Activated T-helper 1 cell treated with anti-CD3 and anti-CD28 coated beads, Interleukin-12 subunit alpha, Interleukin-12 subunit beta, Interleukin-2, Interleukin-4 antibody, amounts not matched to agents 30 ng/mL and 10 ng/mL and 1 ng/mL, durations not matched to agents 14 hours and 24 hours and 36 hours (primary cell): ENCODE measurements at regions of chr22 and their contacts with region 1.

Region 1: GRCh38 chr22:19432133-19432851 is at the start of gene MRPL40:
- DNase-seq: peak; percentile 88
- H3K4me3 Mint-ChIP-seq: peak within 1 kb of the TSS; percentile 92
- H3K27ac Mint-ChIP-seq: peak within 1 kb of the TSS; percentile 94
- H3K4me1 Mint-ChIP-seq: peaks cover 41% of the 10 kb centered on the region
- H3K27me3 Mint-ChIP-seq: no peaks in the 10 kb centered on the region
- total RNA-seq, gene MRPL40: 36.0 and 38.5 TPM in 2 replicates

Region 2: GRCh38 chr22:19143967-19144400 is 288.3 kb before region 1 on chr22:
- intact Hi-C with region 1: loop called (anchors 1 kb)
- DNase-seq: peak; percentile 40
- H3K4me3 Mint-ChIP-seq: peak overlapping the region; percentile 98
- H3K27ac Mint-ChIP-seq: peak overlapping the region; percentile 97
- H3K4me1 Mint-ChIP-seq: peaks cover 23% of the 10 kb centered on the region
- H3K27me3 Mint-ChIP-seq: peaks cover 22% of the 10 kb centered on the region

Region 3: GRCh38 chr22:19291580-19292457 is 140.5 kb before region 1 on chr22 and contains the start of gene CLTCL1:
- intact Hi-C with region 1: loop called (anchors 5 kb)
- DNase-seq: peak; percentile 66
- H3K4me3 Mint-ChIP-seq: peak within 1 kb of the TSS; percentile 91
- H3K27ac Mint-ChIP-seq: peak within 1 kb of the TSS; percentile 88
- H3K4me1 Mint-ChIP-seq: peaks cover 24% of the 10 kb centered on the region
- H3K27me3 Mint-ChIP-seq: peaks cover 41% of the 10 kb centered on the region
- total RNA-seq, gene CLTCL1: 0.64 and 0.73 TPM in 2 replicates

Region 4: GRCh38 chr22:19376247-19376646 is 56.0 kb before region 1 on chr22:
- intact Hi-C with region 1: no loop called
- DNase-seq: no peak
- H3K4me3 Mint-ChIP-seq: no peak overlapping the region
- H3K27ac Mint-ChIP-seq: no peak overlapping the region
- H3K4me1 Mint-ChIP-seq: no peaks in the 10 kb centered on the region
- H3K27me3 Mint-ChIP-seq: no peaks in the 10 kb centered on the region

Region 5: DNA sequence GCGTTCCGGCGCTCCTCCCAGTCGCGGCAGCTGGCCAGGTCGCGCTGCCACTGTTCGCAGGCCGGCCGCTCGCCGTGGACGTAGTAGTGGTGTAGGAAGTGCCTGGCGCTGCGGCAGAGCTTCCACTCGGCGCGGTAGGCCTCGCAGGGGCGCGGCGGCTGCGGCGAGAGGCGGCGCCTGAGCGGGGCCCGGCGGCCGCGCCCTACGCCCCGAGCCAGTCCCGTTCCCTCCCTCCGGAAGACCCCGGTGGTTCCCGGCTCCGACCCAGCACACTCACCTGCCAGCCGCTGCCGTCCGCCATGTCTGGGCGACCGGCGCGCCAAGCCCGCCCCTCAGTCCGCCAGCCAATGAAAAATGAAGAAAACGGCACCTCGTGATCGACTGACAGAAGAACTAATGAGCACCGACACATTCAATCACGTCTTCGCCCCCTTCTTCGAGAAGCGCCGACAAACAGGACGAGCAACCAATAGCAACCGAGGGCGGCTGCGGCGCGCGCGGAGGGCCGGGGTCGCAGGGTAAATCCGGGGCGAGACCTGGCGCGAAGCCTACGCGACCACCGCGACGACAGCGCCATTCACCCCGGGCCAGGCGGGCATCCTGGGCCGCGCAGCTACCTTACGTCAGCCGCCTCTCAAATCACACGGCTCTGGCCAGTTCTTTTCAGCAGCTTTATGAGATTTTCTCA is 15.2 kb after region 1 on chr22 and contains the start of gene C22orf39:
- intact Hi-C with region 1: loop called (anchors 1 kb)
- DNase-seq: peak; percentile 88
- H3K4me3 Mint-ChIP-seq: peak within 1 kb of the TSS; percentile 95
- H3K27ac Mint-ChIP-seq: peak within 1 kb of the TSS; percentile 94
- H3K4me1 Mint-ChIP-seq: peaks cover 46% of the 10 kb centered on the region
- H3K27me3 Mint-ChIP-seq: no peaks in the 10 kb centered on the region
- total RNA-seq, gene C22orf39: 22.8 and 26.8 TPM in 2 replicates